ENCODE measurements at regions of chr13 and their contacts with region 1.

Region 1: GRCh38 chr13:21176220-21176982 is at the starts of genes MRPL57 and SKA3:
- DNase-seq: peak; percentile 84
- ATAC-seq: peak; percentile 90
- H3K4me3 ChIP-seq: peak within 1 kb of the TSS; percentile 75 to 95
- H3K27ac ChIP-seq: peak within 1 kb of the TSS; percentile 95
- H3K4me1 ChIP-seq: peaks cover 13 to 31% of the 10 kb centered on the region in 2 experiments
- H3K27me3 ChIP-seq: no peaks in the 10 kb centered on the region
- CTCF ChIP-seq: no peak
- POLR2A ChIP-seq: peak; percentile 89
- RAD21 ChIP-seq: no peak
- total RNA-seq, gene MRPL57: 26.3 TPM
- total RNA-seq, gene SKA3: 43.3 TPM

Region 2: GRCh38 chr13:19737844-19738557 is 1438.4 kb before region 1 on chr13:
- CTCF ChIA-PET with region 1: no interaction called
- POLR2A ChIA-PET with region 1: no interaction called
- RAD21 ChIA-PET with region 1: no interaction called
- intact Hi-C with region 1: no loop called
- DNase-seq: no peak
- ATAC-seq: no peak
- H3K4me3 ChIP-seq: no peak overlapping the region
- H3K27ac ChIP-seq: no peak overlapping the region
- H3K4me1 ChIP-seq: peaks cover 0 to 5% of the 10 kb centered on the region in 2 experiments; a peak in 1 of 4 replicates
- H3K27me3 ChIP-seq: no peaks in the 10 kb centered on the region
- CTCF ChIP-seq: no peak
- POLR2A ChIP-seq: no peak
- RAD21 ChIP-seq: no peak

Region 3: GRCh38 chr13:20505405-20506366 is 670.7 kb before region 1 on chr13:
- CTCF ChIA-PET with region 1: no interaction called
- POLR2A ChIA-PET with region 1: no interaction called
- RAD21 ChIA-PET with region 1: no interaction called
- intact Hi-C with region 1: no loop called
- DNase-seq: no peak
- ATAC-seq: no peak
- H3K4me3 ChIP-seq: no peak overlapping the region
- H3K27ac ChIP-seq: no peak overlapping the region
- H3K4me1 ChIP-seq: no peaks in the 10 kb centered on the region
- H3K27me3 ChIP-seq: no peaks in the 10 kb centered on the region
- CTCF ChIP-seq: no peak
- POLR2A ChIP-seq: no peak
- RAD21 ChIP-seq: no peak

Region 4: GRCh38 chr13:20942938-20943559 is 233.4 kb before region 1 on chr13:
- CTCF ChIA-PET with region 1: interaction called, 15 read pairs
- POLR2A ChIA-PET with region 1: interaction called, 8 read pairs
- RAD21 ChIA-PET with region 1: interaction called in 1 of 2 experiments, 3 read pairs
- intact Hi-C with region 1: loop called (anchors 1 kb)
- DNase-seq: no peak
- ATAC-seq: no peak
- H3K4me3 ChIP-seq: no peak overlapping the region
- H3K27ac ChIP-seq: no peak overlapping the region
- H3K4me1 ChIP-seq: peaks cover 0 to 8% of the 10 kb centered on the region in 2 experiments; a peak in 2 of 4 replicates
- H3K27me3 ChIP-seq: no peaks in the 10 kb centered on the region
- CTCF ChIP-seq: no peak
- POLR2A ChIP-seq: no peak
- RAD21 ChIP-seq: no peak

Region 5: DNA sequence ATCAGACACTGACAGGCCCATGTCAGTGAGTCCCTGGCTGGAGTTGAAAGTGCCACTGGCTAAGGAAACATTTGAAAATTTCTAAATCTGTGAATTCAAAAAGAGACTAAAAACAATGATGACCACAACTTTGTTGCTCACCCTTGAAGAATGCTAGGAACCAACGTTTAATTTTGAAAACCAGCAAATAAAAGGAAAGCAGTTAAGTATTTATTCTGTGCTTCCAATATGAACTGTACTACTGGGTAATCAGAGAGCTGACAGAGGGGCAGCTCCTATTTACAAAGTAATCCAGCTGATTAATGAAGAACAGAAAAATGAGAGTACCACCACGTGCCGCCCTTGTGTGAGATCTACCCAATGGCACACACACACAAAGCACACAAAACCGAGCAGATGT is 70.3 kb before region 1 on chr13:
- CTCF ChIA-PET with region 1: interaction called, 4 read pairs
- POLR2A ChIA-PET with region 1: no interaction called
- RAD21 ChIA-PET with region 1: no interaction called
- intact Hi-C with region 1: loop called (anchors 1 kb)
- DNase-seq: no peak
- ATAC-seq: no peak
- H3K4me3 ChIP-seq: no peak overlapping the region
- H3K27ac ChIP-seq: no peak overlapping the region
- H3K4me1 ChIP-seq: peaks cover 0 to 3% of the 10 kb centered on the region in 2 experiments; a peak in 1 of 4 replicates
- H3K27me3 ChIP-seq: no peaks in the 10 kb centered on the region
- CTCF ChIP-seq: no peak
- POLR2A ChIP-seq: no peak
- RAD21 ChIP-seq: no peak

Region 6: GRCh38 chr13:21164631-21165030 is 11.8 kb before region 1 on chr13:
- CTCF ChIA-PET with region 1: interaction called, 3 read pairs
- POLR2A ChIA-PET with region 1: interaction called, 10 read pairs
- RAD21 ChIA-PET with region 1: no interaction called
- intact Hi-C with region 1: no loop called
- DNase-seq: no peak
- ATAC-seq: no peak
- H3K4me3 ChIP-seq: no peak overlapping the region
- H3K27ac ChIP-seq: no peak overlapping the region
- H3K4me1 ChIP-seq: no peaks in the 10 kb centered on the region
- H3K27me3 ChIP-seq: no peaks in the 10 kb centered on the region
- CTCF ChIP-seq: no peak
- POLR2A ChIP-seq: no peak
- RAD21 ChIP-seq: no peak

Region 7: DNA sequence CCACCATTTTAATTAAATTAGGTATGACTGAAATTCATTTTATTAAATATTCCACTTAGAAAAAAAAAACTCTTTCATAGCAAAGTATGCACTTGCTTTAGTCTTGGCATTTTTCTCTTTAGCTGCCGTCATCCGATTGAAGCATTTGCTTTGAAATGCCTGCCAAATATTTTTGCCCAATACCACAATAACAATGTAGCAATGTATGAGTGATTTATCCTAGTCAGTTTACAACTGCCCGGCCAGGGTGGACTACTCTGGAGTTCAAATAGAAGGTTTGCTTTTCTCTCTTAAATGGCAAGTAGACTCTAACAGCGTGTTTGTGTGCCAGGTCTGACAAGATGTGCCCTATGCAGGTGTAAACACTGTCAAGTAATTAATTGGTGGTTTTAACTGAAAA is 1329.1 kb after region 1 on chr13:
- CTCF ChIA-PET with region 1: no interaction called
- POLR2A ChIA-PET with region 1: no interaction called
- RAD21 ChIA-PET with region 1: no interaction called
- intact Hi-C with region 1: no loop called
- DNase-seq: no peak
- ATAC-seq: no peak
- H3K4me3 ChIP-seq: no peak overlapping the region
- H3K27ac ChIP-seq: no peak overlapping the region
- H3K4me1 ChIP-seq: no peaks in the 10 kb centered on the region
- H3K27me3 ChIP-seq: no peaks in the 10 kb centered on the region
- CTCF ChIP-seq: no peak
- POLR2A ChIP-seq: no peak
- RAD21 ChIP-seq: no peak

Measured in HCT116 (cell line).